ENCODE measurements at regions of chr17 and their contacts with region 1.

Region 1: DNA sequence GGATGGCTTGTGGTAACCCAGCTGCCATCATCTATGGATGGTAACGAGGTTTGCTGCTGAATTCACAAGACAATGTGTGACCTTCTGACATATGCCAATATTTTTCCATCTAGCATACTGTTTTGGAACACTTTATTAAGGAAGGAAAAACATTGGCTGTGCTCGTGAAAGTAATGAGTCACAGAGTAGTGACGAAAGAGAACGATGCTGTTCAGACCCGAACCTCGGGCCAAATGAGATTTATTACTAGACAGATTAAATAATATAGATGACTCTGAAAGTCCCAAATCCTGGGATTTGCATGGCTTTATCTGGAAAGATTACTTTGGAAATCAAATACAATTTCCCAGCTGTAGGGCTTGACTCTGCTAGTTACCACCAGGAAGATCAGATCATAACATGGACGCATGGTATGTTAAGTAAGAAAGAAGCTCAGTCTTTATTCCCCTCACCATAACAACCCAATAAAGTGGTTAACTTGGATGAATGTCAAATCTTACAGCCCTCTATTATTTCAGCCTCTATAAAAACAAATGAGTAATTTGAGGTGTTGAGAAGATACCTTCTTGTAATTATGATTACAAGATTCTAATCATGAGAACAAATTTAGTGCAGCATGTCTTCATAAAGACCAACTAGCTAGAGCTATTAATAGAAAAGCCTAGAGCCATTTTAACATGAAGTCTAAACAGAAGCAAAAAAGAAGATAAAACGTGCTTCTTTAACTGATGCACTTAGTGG is 32.6 kb downstream of the ERN1 start:
- DNase-seq: no peak
- ATAC-seq: no peak
- H3K4me3 ChIP-seq: no peak overlapping the region
- H3K4me3 Mint-ChIP-seq: peak overlapping the region in 1 of 10 donors; percentile 14
- H3K27ac ChIP-seq: no peak overlapping the region
- H3K27ac Mint-ChIP-seq: peak overlapping the region in 1 of 9 donors; percentile 45
- H3K4me1 ChIP-seq: peaks cover 7 to 12% of the 10 kb centered on the region in 2 donors
- H3K4me1 Mint-ChIP-seq: peaks cover 30 to 75% (median 50%) of the 10 kb centered on the region in 7 donors
- H3K27me3 ChIP-seq: no peaks in the 10 kb centered on the region
- H3K27me3 Mint-ChIP-seq: no peaks in the 10 kb centered on the region

Region 2: DNA sequence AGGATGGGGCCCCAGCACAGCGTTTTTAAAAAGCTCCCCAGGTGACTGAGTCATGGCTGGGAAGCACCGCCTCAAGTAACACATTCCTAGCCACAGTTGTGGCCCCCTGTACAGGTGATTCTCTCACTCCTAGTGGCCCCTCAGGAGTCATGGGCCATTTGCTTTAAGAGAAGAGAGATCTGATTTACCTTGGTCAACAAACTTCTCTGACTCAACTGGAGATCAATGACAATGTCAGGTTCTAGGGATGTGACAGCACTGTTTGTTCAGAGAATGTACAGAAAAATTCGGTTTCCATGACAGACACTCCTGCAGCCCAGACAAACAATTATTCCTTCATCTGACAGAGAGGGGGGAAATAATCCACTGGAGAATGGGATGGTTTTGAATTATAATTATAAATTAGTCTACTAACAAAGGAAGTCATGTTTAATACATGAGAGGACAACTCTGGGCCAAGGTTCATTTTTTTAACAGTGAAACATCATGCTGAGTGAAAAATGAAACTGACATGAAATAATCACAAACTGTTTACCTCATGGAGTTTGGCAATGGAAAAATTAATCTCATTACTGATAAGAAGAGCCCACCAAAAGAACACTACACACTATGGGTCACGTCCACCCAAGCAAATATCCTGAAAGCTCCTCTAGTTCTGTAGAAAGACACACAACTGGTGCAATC is 22.9 kb after region 1 on chr17:
- CTCF ChIA-PET with region 1: no interaction called
- POLR2A ChIA-PET with region 1: interaction called, 3 read pairs
- intact Hi-C with region 1: loop called in 1 of 2 experiments (anchors 2 kb)
- DNase-seq: no peak
- ATAC-seq: no peak
- H3K4me3 ChIP-seq: no peak overlapping the region
- H3K4me3 Mint-ChIP-seq: peak overlapping the region in 7 of 10 donors; percentile 8 to 92 (median 81)
- H3K27ac ChIP-seq: peak overlapping the region; percentile 64
- H3K27ac Mint-ChIP-seq: peak overlapping the region; percentile 77 to 97 (median 90)
- H3K4me1 ChIP-seq: peaks cover 27 to 36% of the 10 kb centered on the region in 2 donors
- H3K4me1 Mint-ChIP-seq: peaks cover 40 to 76% (median 50%) of the 10 kb centered on the region in 7 donors
- H3K27me3 ChIP-seq: no peaks in the 10 kb centered on the region
- H3K27me3 Mint-ChIP-seq: no peaks in the 10 kb centered on the region